ENCODE measurements at regions of chr12 and their contacts with region 1.

Region 1: DNA sequence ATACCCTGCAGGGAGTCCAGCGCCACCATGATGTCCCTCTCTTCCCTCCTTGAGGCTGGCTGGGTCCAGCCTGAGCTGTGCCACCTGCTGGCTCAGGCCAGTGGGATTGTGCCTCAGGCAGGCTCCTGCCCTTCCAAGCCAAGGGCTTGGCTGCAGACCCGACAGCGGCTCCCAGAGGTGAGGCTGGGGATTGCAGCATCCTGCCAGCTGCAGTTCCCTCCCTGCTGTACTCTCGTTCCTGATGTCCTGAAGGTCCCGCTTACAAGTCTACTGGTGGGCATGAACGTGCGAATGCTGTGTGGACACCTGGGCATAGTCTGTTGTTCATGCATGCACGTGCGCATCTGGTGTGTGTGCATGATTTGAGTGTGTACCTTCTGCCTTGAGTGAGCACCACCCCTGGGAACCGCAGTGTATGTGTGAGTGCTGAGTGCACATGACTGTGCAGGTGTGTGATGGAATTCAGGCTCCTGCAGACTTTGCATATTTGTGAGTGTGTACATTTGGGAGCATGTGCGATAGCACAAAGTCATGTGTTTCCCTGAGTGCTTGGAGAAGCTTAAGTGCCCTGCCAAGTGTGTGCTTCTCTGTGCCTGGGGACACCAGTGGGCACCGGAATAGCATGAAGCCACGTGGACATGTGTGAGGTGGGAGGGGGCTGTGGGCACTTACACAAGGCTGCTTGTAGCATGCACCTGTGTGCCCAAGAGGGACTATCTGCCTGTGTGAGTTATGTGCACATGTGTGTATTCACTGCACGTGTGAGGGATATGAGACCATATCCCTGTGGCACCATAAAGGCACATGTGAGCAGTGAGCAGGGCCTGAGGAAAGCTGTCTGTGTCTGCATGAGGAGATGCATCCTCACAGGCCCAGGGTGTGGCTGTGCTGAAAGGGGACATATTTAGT is 19.3 kb upstream of the KRT7 start:
- DNase-seq: no peak
- H3K4me3 ChIP-seq: no peak overlapping the region
- CTCF ChIP-seq: peak; percentile 100

Region 2: GRCh38 chr12:52020539-52021336 is 193.0 kb before region 1 on chr12:
- CTCF ChIA-PET with region 1: no interaction called
- POLR2A ChIA-PET with region 1: no interaction called
- DNase-seq: no peak
- H3K4me3 ChIP-seq: no peak overlapping the region
- CTCF ChIP-seq: peak; percentile 85

Region 3: DNA sequence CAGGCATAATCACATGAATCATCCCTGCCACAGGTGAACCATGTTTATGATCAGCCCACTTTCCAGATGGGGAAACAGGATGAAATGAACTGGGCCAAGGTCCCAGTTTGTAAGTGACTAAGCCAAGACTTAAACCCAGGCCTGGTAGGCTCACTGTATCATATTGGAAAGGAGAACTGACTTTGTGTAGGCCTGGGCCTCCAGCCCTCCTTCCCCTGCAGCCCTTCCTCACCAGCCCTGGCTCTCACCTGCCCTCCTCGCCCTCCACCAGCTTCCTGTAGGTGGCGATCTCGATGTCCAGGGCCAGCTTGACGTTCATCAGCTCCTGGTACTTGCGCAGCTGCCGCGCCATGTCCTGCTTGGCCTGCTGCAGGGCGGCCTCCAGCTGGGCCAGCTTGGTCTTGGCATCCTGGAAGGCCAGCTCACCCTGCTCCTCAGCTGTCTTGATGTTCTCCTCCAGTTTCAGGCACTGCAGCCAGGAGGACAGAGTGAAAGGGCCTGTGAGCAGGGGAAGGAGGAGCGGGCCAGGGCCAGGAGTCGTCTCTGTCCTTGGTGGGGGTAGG is 41.7 kb before region 1 on chr12:
- CTCF ChIA-PET with region 1: interaction called, 52 read pairs
- POLR2A ChIA-PET with region 1: interaction called, 6 read pairs
- DNase-seq: no peak
- H3K4me3 ChIP-seq: no peak overlapping the region
- CTCF ChIP-seq: peak; percentile 55

Region 4: DNA sequence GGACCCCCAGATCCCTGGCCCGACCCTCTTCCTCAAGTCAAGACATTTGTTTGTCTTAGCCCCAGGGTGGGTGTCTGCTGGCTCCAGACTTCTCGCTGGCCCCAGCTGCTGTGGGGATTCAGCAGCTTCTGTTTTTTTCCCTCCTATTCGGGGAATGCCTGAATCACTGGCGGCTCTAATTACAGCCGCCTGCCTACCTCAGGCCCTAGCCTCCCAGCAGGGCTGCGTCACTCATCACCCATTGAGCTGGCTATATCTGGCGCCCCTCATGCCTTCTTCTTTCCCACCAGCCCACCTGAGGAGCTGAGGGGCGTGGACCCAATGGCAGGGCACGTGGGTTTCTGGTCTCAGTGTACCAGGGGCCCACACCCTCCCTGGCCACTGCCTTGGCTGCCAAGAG is 32.0 kb before region 1 on chr12:
- CTCF ChIA-PET with region 1: interaction called, 29 read pairs
- POLR2A ChIA-PET with region 1: interaction called, 6 read pairs
- DNase-seq: no peak
- H3K4me3 ChIP-seq: no peak overlapping the region; the same call in 1 of the 2 replicates
- CTCF ChIP-seq: no peak

Region 5: GRCh38 chr12:52192173-52192791 is 21.5 kb before region 1 on chr12:
- CTCF ChIA-PET with region 1: interaction called, 71 read pairs
- POLR2A ChIA-PET with region 1: no interaction called
- DNase-seq: peak; percentile 98
- H3K4me3 ChIP-seq: no peak overlapping the region
- CTCF ChIP-seq: no peak

Region 6: DNA sequence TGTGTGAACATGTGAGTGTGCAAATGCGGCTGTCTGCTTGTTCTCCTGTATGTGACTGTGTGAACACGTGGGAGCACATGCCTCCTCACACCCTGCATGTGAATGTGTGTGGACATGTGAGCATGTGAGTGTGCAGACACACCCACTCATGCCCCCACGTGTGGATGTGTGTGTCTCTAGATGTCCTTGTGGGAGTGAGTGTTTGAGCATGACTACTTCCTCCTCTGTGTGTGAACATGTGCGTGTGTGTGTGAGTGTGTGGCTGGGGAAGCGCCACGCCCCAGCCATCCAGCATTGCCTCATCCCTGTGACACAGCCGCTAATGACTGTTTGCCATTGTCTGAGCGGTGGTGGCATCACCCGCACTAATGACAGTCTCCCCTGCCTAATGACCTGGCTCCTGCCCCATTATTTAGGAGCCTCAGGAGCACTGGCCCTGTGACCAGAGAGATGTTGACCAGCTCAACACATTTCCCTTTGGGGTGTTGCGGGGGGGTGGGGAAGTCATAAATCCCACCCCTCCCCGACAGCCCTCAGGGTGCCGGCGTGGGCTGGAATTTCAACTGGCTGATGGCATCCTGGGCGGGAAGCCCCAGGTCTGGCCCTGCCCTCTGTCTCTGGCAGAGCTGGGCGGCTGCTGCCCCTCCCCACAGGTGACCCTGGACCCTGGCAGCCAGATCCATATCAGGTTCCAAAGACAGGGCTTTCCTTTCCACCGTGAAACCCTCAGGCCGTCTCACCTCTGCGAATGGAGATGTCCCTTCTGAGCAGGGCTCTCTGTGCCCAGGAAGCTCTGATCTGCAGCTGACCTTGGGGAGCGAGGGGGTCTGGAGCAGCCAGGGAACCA is 10.5 kb before region 1 on chr12:
- CTCF ChIA-PET with region 1: interaction called, 87 read pairs
- POLR2A ChIA-PET with region 1: no interaction called
- DNase-seq: peak; percentile 67
- H3K4me3 ChIP-seq: peak overlapping the region; percentile 13
- CTCF ChIP-seq: no peak

Region 7: DNA sequence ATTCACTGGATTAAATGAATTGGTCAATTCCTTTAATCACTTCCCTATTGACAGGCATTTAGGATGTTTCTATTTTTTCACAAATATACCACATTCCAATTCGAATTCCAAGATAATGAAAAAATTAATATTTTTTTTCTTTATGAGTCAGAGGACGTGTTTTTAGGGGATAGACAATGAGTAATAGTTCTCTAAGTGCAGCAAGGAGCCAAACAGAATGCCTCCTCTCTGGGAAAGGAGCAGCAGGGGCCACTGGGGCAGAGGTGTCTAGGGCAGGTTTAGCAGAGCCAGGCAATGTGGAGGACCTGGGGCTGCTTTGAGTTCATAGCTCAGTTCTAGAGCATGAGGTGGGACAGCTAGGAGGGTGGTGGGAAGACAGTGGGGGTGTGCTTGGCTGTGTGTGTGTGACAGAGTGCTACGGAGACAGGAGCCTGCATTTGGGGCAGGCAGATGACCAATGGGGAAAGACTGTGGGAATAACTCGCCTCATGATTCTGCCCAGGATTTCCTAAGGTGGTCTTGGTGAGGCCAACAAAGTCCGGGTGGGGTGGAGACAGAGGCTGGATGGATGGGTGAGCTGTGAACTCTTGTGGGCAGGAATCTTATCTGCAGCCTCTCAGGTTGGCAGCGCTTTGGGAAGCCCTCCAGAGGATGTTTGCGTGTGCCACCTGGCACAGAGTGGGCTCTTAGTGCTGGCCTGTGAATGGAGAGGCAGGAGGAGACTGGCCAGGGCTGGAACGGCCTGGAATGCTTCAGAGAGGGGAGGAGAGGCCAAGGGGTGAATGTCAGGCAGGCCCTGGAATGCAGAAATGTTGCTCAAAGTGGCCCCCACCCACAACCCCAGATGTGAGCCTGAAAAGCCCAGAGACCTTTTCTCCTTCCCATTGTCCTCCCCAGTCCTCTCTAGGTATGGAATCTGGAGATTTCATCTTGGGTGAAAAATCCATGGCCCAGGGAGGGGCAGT is 16.8 kb after region 1 on chr12:
- CTCF ChIA-PET with region 1: interaction called, 144 read pairs
- POLR2A ChIA-PET with region 1: interaction called, 3 read pairs
- DNase-seq: peak; percentile 50
- H3K4me3 ChIP-seq: no peak overlapping the region
- CTCF ChIP-seq: no peak

Measured in AG04449 (cell line).